Heart right ventricle (tissue), 16 donors: ENCODE measurements at regions of chr11 and their contacts with region 1.

Region 1: GRCh38 chr11:87097582-87097981 is 59.8 kb downstream of the TMEM135 start:
- DNase-seq: peak in 1 of 2 donors; percentile 28
- ATAC-seq: peak in 7 of 8 donors; percentile 16 to 79 (median 64)
- H3K4me3 ChIP-seq: no peak overlapping the region
- H3K27ac ChIP-seq: no peak overlapping the region
- H3K4me1 ChIP-seq: peaks cover 0 to 9% (median 0%) of the 10 kb centered on the region in 9 donors
- H3K27me3 ChIP-seq: no peaks in the 10 kb centered on the region
- CTCF ChIP-seq: peak; percentile 26 to 78 (median 68)

Region 2: GRCh38 chr11:86743223-86744150 is 354.1 kb before region 1 on chr11:
- intact Hi-C with region 1: no loop called
- DNase-seq: no peak
- ATAC-seq: peak in 6 of 8 donors; percentile 33 to 75 (median 38)
- H3K4me3 ChIP-seq: no peak overlapping the region
- H3K27ac ChIP-seq: peak overlapping the region in 2 of 10 donors; percentile 3 to 62
- H3K4me1 ChIP-seq: peaks cover 10 to 45% (median 25%) of the 10 kb centered on the region in 9 donors
- H3K27me3 ChIP-seq: no peaks in the 10 kb centered on the region
- CTCF ChIP-seq: no peak

Region 3: DNA sequence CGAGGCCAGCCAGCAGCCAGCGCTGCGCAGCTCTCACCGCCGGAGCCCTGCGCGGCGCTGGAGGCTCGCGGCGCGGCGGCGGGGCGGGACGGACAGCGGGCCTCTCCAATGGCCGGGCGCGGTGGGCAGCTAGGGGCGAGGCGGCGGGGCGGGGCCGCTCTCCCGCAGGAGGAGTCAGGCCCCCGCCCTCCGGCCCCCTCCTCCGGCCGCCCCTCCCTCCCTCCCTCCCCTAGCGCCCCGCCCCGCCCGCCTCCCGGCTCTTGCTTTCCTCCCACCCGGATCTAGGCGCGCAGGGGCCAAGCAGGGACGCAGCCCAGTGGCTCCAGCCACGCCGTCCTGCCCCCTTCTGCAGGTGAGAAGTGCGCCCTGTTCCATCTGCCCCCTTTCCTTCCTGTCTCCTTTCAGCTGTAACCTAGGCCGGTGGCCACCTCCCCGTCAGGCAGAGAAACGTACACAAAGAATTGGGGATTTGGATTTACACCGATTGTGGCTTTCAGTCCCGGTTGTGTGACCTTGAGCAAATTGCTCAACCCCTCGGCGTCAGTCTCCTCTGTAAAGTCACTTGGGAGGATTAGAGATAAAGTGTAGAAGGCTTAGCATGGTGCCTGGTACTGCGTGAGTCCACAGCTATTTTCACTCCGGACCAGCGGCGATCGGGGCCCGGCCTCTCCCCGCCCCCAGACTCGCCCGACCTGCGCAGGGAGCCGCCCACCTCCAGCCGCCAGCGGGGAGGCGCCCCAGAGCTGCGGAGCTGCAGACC is 142.0 kb before region 1 on chr11 and contains the start of gene FZD4:
- intact Hi-C with region 1: loop called in 2 of 10 experiments (anchors 10 kb)
- DNase-seq: peak; percentile 92 to 94
- ATAC-seq: peak; percentile 89 to 97 (median 92)
- H3K4me3 ChIP-seq: peak within 1 kb of the TSS; percentile 84 to 100 (median 98)
- H3K27ac ChIP-seq: peak within 1 kb of the TSS; percentile 86 to 100 (median 98)
- H3K4me1 ChIP-seq: peaks cover 2 to 59% (median 43%) of the 10 kb centered on the region in 9 donors
- H3K27me3 ChIP-seq: peaks cover 0 to 36% (median 0%) of the 10 kb centered on the region in 7 donors
- CTCF ChIP-seq: peak in 8 of 9 donors; percentile 36 to 73 (median 44)
- total RNA-seq, gene FZD4: 17.8 to 34.6 (median 23.7) TPM